ENCODE measurements at regions of chr4 and their contacts with region 1.

Region 1: DNA sequence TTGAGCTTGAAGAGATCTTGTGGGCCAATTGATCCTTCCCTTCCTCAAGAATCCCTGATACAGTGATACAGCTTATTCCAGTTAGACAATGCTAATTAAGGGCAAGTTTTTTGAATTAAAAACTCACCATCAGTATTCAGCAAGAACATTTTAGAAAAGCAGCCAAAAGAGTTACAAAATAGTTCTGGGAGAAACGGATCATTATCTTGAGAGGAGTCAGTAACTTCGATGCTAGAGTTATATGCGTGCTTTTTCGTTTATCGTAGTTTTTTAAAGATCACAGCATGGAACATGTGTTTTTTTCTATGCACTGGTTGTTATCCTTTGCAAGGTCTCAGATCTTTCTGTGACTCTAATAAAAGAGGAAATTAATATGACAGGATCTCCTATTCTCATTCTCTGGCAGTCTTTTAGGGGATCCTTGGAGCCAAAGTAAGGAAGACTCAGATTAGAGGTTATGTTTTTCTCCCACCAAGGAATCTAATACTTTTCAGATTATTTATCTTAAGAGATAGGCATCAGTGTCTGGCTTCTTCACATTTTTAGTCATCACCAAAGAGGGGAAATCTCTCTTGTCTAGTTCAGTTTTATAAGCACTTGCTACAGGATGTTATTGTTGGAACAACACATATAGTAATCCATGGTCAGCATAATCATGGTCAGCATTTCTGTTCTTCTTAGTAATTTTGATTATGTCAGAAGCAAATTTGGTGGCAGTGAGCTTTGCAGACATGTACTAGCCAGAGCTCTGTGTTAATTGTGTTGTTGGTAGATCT is 109.7 kb downstream of the PDLIM5 start:
- DNase-seq: no peak
- H3K4me3 ChIP-seq: no peak overlapping the region
- H3K4me3 Mint-ChIP-seq: no peak overlapping the region
- H3K27ac Mint-ChIP-seq: peak overlapping the region; percentile 66
- H3K4me1 ChIP-seq: peaks cover 70% of the 10 kb centered on the region
- H3K4me1 Mint-ChIP-seq: peaks cover 16% of the 10 kb centered on the region
- H3K27me3 ChIP-seq: no peaks in the 10 kb centered on the region
- H3K27me3 Mint-ChIP-seq: no peaks in the 10 kb centered on the region
- CTCF ChIP-seq: no peak

Region 2: DNA sequence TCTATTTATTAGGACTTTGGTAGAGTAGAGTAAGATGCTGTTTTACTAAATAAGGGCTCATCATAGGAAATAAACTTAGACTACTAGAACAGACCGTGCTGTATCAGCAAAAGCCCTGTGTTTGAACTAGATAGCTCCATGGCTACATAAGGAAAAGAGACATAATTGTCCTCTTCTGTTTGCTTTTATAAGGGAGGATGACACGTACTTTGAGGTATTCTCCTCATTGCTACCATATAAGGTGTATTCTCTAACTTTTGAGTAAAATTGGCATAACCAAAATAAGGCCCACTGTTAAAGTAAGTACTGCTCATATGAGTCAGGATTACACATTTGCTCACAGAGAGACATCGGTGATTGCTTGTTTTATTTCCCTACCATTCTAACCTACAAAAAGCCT is 45.4 kb before region 1 on chr4:
- CTCF ChIA-PET with region 1: no interaction called
- POLR2A ChIA-PET with region 1: no interaction called
- intact Hi-C with region 1: loop called (anchors 5 kb)
- DNase-seq: no peak
- H3K4me3 ChIP-seq: no peak overlapping the region
- H3K4me3 Mint-ChIP-seq: no peak overlapping the region
- H3K27ac Mint-ChIP-seq: peak overlapping the region; percentile 22
- H3K4me1 ChIP-seq: peaks cover 40% of the 10 kb centered on the region
- H3K4me1 Mint-ChIP-seq: peaks cover 33% of the 10 kb centered on the region
- H3K27me3 ChIP-seq: no peaks in the 10 kb centered on the region
- H3K27me3 Mint-ChIP-seq: no peaks in the 10 kb centered on the region
- CTCF ChIP-seq: no peak

Region 3: DNA sequence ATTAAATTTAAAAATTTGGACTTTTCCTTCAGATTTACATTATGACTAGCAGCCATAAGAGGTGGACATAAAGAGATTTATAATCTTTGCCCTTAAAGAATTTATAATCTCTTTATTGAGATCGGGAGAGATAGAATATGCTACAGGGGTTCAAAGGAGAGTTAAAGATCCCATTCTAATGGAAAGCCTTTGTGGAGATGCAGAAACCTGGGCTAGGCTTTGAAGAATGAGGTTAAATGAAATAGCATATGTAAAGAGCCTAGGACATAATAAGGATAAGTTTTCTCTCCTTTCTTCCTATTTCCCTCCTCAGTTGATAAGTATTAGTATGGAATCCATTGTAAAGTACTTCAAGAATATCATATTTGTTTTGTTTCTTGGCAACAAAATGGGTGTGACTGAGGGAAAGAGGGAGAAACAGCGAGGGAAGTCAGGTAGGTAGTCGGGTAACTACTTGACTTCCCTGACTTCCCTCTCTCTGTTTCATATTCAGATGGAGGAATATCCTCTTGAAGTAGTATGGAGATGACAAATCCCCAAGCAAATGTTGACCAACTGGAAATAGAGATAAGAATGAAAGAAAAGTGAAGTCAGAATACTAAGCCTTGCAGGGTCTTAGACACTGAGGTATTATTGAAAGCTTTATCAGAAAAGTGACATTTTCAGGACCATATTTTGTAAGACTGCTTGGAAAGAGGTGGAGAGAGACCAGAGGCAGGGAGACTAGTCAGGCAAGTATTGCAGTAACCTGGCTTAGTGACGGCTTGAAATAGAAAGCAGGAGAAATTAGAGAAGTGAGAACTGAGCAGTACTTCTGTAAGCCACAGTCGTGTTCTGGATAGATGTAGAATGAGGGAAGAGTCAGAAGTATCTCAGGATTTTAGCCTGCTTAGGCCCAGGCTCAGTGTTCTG is 26.8 kb before region 1 on chr4:
- CTCF ChIA-PET with region 1: no interaction called
- POLR2A ChIA-PET with region 1: no interaction called
- intact Hi-C with region 1: loop called (anchors 1 kb)
- DNase-seq: peak; percentile 45 to 67
- H3K4me3 ChIP-seq: no peak overlapping the region
- H3K4me3 Mint-ChIP-seq: peak overlapping the region; percentile 68
- H3K27ac Mint-ChIP-seq: peak overlapping the region; percentile 74
- H3K4me1 ChIP-seq: peaks cover 70% of the 10 kb centered on the region
- H3K4me1 Mint-ChIP-seq: peaks cover 51% of the 10 kb centered on the region
- H3K27me3 ChIP-seq: no peaks in the 10 kb centered on the region
- H3K27me3 Mint-ChIP-seq: no peaks in the 10 kb centered on the region
- CTCF ChIP-seq: no peak

Region 4: GRCh38 chr4:94548571-94548970 is 12.9 kb before region 1 on chr4:
- CTCF ChIA-PET with region 1: no interaction called
- POLR2A ChIA-PET with region 1: no interaction called
- intact Hi-C with region 1: loop called (anchors 1 kb)
- DNase-seq: peak in 1 of 2 experiments; percentile 41
- H3K4me3 ChIP-seq: no peak overlapping the region
- H3K4me3 Mint-ChIP-seq: peak overlapping the region; percentile 17
- H3K27ac Mint-ChIP-seq: peak overlapping the region; percentile 89
- H3K4me1 ChIP-seq: peaks cover 83% of the 10 kb centered on the region
- H3K4me1 Mint-ChIP-seq: peaks cover 43% of the 10 kb centered on the region
- H3K27me3 ChIP-seq: no peaks in the 10 kb centered on the region
- H3K27me3 Mint-ChIP-seq: no peaks in the 10 kb centered on the region
- CTCF ChIP-seq: no peak

Measured in Caco-2 (cell line).